Calu3 (cell line): ENCODE measurements at regions of chr12 and their contacts with region 1.

Region 1: GRCh38 chr12:7638760-7639555 is 26.8 kb downstream of the APOBEC1 start:
- DNase-seq: peak; percentile 75
- H3K4me3 Mint-ChIP-seq: peak overlapping the region; percentile 54
- H3K27ac Mint-ChIP-seq: no peak overlapping the region
- H3K4me1 Mint-ChIP-seq: peaks cover 18% of the 10 kb centered on the region
- H3K27me3 Mint-ChIP-seq: no peaks in the 10 kb centered on the region
- CTCF ChIP-seq: peak; percentile 74

Region 2: DNA sequence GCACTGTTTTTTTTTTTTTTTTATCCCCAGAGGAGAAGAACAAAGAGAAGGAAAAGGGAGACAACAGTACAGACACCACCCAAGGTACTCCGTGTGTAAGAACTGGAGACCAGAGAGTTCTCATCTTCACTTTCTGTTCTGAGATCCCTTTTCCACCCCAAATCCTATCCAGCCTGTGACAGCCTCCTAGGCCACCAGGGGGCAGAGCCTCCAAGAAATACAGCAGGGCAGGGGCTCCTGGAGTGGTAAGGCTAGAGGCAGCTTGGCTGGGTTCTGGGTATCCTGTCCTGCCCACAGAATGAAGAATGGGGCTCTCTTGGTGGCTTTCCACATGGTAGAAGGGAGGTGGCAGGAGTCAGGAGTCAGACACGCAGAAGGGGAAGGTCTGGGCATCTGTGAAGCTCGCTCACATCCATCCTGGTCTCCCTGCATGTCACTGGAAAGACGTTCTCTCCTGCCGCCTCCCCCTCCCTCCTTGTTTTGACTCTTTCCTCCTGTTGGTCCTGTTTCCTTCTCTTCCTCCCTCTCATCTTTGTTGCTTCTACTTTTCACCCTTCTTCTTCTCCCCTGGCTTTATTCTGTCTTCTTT is 496.8 kb before region 1 on chr12:
- CTCF ChIA-PET with region 1: no interaction called
- intact Hi-C with region 1: loop called (anchors 2 kb)
- DNase-seq: peak; percentile 68
- H3K4me3 Mint-ChIP-seq: no peak overlapping the region
- H3K27ac Mint-ChIP-seq: no peak overlapping the region
- H3K4me1 Mint-ChIP-seq: no peaks in the 10 kb centered on the region
- H3K27me3 Mint-ChIP-seq: no peaks in the 10 kb centered on the region
- CTCF ChIP-seq: peak; percentile 66

Region 3: GRCh38 chr12:7219599-7220243 is 419.2 kb before region 1 on chr12:
- CTCF ChIA-PET with region 1: no interaction called
- intact Hi-C with region 1: loop called (anchors 1 kb)
- DNase-seq: peak; percentile 72
- H3K4me3 Mint-ChIP-seq: no peak overlapping the region
- H3K27ac Mint-ChIP-seq: no peak overlapping the region
- H3K4me1 Mint-ChIP-seq: no peaks in the 10 kb centered on the region
- H3K27me3 Mint-ChIP-seq: no peaks in the 10 kb centered on the region
- CTCF ChIP-seq: peak; percentile 78

Region 4: GRCh38 chr12:7374423-7375144 is 264.4 kb before region 1 on chr12:
- CTCF ChIA-PET with region 1: no interaction called
- intact Hi-C with region 1: loop called (anchors 1 kb)
- DNase-seq: peak; percentile 69
- H3K4me3 Mint-ChIP-seq: no peak overlapping the region
- H3K27ac Mint-ChIP-seq: no peak overlapping the region
- H3K4me1 Mint-ChIP-seq: peaks cover 17% of the 10 kb centered on the region
- H3K27me3 Mint-ChIP-seq: no peaks in the 10 kb centered on the region
- CTCF ChIP-seq: peak; percentile 65

Region 5: DNA sequence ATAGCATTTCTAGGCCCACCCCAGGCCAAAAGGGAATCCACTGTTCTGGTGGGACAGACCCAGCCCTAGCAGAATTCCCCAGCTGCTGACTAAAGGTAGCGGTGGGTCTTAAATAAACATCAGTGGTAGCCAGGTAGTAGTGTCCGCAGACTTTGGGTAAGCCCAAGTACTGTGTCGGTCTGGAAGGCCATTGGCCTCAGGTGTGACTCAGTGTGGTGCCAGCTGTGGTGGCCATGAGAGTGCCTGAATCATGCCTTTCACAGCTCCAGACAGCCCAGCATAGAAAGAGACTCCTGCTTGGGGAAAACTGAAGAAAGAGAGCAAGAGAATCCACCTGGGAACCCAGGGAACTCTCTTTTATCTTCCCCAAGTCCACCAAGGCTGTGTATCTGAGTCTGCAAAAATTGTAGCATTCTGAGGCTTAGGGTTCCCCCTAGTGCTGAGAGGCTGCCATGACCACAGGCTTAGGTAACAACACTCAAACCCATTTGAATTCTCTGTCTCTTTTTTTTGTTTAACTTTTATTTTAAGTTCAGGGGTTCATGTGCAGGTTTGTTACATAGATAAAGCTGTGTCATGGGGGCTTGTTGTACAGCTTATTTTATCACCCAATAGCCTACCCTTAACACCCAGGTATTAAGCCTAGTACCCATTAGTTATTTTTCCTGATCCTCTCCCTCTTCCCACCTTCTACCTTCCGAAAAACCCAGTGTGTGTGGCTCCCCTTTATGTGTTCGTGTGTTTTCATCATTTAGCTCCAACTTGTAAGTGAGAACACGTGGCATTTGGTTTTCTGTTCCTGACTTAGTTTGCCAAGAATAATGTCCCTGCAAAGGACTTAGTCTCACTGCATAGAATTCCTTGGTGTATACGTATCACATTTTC is 178.3 kb before region 1 on chr12:
- CTCF ChIA-PET with region 1: no interaction called
- intact Hi-C with region 1: loop called (anchors 1 kb)
- DNase-seq: peak; percentile 66
- H3K4me3 Mint-ChIP-seq: no peak overlapping the region
- H3K27ac Mint-ChIP-seq: no peak overlapping the region
- H3K4me1 Mint-ChIP-seq: no peaks in the 10 kb centered on the region
- H3K27me3 Mint-ChIP-seq: no peaks in the 10 kb centered on the region
- CTCF ChIP-seq: peak; percentile 88

Region 6: DNA sequence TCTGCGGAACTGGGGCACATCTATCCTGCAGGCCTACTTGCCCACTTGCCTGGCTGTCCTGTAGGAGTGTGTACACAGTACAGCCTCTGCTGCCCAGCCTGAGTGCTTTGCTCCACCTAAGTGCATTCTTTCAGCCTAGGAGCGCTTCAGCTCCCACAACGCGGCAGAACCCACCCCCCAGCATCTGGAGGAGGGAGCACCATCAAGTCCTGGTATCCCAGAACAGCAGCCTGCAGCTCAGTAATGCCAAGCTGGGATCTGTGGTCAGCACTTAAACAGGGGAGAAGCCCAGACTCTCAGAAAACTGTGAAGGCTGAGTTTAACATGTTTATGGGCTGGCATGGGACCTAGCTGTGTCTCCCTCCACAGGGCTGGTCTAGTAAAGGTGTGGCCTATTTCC is 55.4 kb before region 1 on chr12:
- CTCF ChIA-PET with region 1: interaction called, 3 read pairs
- intact Hi-C with region 1: loop called (anchors 2 kb)
- DNase-seq: peak; percentile 10
- H3K4me3 Mint-ChIP-seq: peak overlapping the region; percentile 12
- H3K27ac Mint-ChIP-seq: peak overlapping the region; percentile 97
- H3K4me1 Mint-ChIP-seq: peaks cover 37% of the 10 kb centered on the region
- H3K27me3 Mint-ChIP-seq: no peaks in the 10 kb centered on the region
- CTCF ChIP-seq: no peak